ENCODE measurements at regions of chr17 and their contacts with region 1.

Region 1: DNA sequence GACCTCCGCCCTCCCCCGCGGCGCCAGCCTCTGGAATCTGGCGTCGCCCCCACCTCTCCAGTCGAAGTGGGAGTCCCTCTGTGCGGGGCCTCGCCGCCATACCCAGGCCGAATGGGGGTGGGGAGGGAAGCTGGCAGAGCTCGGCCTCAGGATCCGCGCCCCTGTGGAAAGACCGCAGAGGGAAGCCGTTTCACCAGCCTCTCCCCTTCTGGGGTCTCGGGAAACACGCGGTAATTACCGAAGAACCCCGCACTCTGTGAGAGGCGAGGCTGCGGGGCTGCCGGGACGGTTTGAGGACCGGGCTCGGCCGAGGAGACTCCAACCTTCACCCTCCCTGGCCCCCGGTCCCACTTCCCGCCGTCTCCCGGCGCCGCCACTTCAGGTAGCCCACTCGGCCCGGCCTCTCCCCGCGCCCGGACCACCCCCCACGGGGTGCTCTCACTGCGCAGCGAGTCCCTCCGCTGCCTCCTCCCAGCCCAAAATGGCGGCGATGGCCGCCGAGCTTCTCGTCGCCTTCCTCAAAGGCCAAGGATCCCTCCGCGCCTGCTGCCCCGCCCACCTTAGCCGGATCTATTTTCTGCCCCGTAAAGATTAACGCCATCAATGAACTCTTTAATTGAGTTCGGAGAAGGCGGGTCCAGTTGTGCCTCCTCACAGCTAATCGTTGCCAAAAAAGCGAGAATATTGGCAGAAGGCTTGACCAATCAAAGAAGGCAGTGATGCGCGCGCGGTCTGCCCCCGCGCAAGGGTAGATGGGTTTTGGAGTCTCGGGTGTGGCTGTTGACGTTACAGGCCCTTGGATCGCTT is 453 bp upstream of the HEXIM2 start:
- DNase-seq: peak; percentile 99
- H3K4me3 Mint-ChIP-seq: peak overlapping the region; percentile 99
- H3K27ac Mint-ChIP-seq: peak overlapping the region; percentile 99
- H3K4me1 Mint-ChIP-seq: peaks cover 38% of the 10 kb centered on the region
- H3K27me3 Mint-ChIP-seq: peaks cover 2% of the 10 kb centered on the region

Region 2: DNA sequence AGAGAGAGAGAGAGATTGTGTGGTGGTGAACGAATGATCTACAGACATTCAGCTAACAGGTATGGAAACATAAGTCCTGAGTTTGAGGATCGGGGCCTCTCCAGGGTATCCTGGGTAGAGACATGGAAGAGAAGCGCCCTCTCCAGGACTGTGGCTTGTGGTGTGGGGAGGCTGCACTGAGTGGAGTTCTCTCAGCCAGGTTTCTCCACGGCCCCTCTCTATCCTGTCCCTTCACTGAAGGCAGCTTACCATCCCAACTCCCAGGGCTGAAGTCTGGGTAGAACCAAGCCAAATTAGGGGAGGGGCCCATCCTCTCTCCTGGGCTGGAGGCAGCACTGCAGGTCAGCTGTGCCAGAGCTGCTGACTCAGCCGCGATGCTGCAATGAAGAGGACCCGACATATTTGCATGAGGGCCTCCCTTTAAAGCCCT is 199.3 kb before region 1 on chr17:
- CTCF ChIA-PET with region 1: no interaction called
- POLR2A ChIA-PET with region 1: no interaction called
- intact Hi-C with region 1: no loop called
- DNase-seq: no peak
- H3K4me3 Mint-ChIP-seq: no peak overlapping the region
- H3K27ac Mint-ChIP-seq: no peak overlapping the region
- H3K4me1 Mint-ChIP-seq: peaks cover 7% of the 10 kb centered on the region
- H3K27me3 Mint-ChIP-seq: peaks cover 46% of the 10 kb centered on the region

Region 3: GRCh38 chr17:45060797-45061605 is 100.2 kb before region 1 on chr17 and contains the start of gene NMT1:
- CTCF ChIA-PET with region 1: no interaction called
- POLR2A ChIA-PET with region 1: interaction called, 3 read pairs
- intact Hi-C with region 1: loop called (anchors 2 kb)
- DNase-seq: peak; percentile 98
- H3K4me3 Mint-ChIP-seq: peak within 1 kb of the TSS; percentile 100
- H3K27ac Mint-ChIP-seq: peak within 1 kb of the TSS; percentile 100
- H3K4me1 Mint-ChIP-seq: peaks cover 48% of the 10 kb centered on the region
- H3K27me3 Mint-ChIP-seq: no peaks in the 10 kb centered on the region
- total RNA-seq, gene NMT1: 158 TPM

Region 4: GRCh38 chr17:45108595-45109521 is 52.4 kb before region 1 on chr17:
- CTCF ChIA-PET with region 1: no interaction called
- POLR2A ChIA-PET with region 1: no interaction called
- intact Hi-C with region 1: no loop called
- DNase-seq: no peak
- H3K4me3 Mint-ChIP-seq: no peak overlapping the region
- H3K27ac Mint-ChIP-seq: no peak overlapping the region
- H3K4me1 Mint-ChIP-seq: no peaks in the 10 kb centered on the region
- H3K27me3 Mint-ChIP-seq: no peaks in the 10 kb centered on the region

Region 5: GRCh38 chr17:45197555-45198334 is 36.5 kb after region 1 on chr17:
- CTCF ChIA-PET with region 1: interaction called, 38 read pairs
- POLR2A ChIA-PET with region 1: no interaction called
- intact Hi-C with region 1: no loop called
- DNase-seq: peak; percentile 93
- H3K4me3 Mint-ChIP-seq: no peak overlapping the region
- H3K27ac Mint-ChIP-seq: no peak overlapping the region
- H3K4me1 Mint-ChIP-seq: peaks cover 4% of the 10 kb centered on the region
- H3K27me3 Mint-ChIP-seq: no peaks in the 10 kb centered on the region

Region 6: DNA sequence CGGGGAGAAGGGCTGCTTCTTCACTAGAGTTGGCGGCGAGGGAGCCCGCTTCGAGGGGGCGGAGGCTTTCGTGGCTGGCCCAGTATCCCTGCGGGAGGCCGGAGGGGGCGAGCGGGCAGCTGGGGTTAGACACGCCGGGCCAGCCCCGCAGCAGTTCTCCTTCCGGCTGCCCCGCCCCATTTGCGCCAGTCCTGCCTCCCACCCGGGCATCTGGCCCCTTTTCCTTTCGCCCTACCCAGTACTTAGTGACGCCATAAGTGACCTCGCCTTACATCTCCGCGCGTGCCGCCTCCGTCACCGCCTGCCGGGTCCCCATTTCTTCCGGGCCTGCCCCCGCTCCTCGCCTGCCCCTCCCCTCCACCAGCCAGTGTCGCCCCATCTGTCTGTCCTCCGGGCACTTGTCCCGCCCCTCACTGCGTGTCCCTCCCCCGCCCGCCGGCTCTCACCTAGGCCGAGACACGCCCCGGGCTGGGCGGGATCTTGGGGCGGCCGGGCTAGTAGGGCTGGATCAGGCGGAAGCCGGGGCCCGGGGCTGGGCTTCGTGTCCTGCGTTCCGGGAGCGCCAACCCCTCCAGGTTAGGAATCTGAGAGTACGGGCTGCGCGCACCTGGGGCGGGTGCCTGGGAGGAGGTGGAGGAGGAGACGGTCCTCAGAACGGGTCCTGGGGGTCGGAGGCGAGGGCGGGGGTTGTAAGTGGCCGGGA is 86.4 kb after region 1 on chr17:
- CTCF ChIA-PET with region 1: no interaction called
- POLR2A ChIA-PET with region 1: interaction called, 7 read pairs
- intact Hi-C with region 1: loop called (anchors 1 kb)
- DNase-seq: peak; percentile 99
- H3K4me3 Mint-ChIP-seq: peak overlapping the region; percentile 86
- H3K27ac Mint-ChIP-seq: peak overlapping the region; percentile 94
- H3K4me1 Mint-ChIP-seq: peaks cover 59% of the 10 kb centered on the region
- H3K27me3 Mint-ChIP-seq: no peaks in the 10 kb centered on the region